Activated T-helper 1 cell treated with anti-CD3 and anti-CD28 coated beads, Interleukin-12 subunit alpha, Interleukin-12 subunit beta, Interleukin-2, Interleukin-4 antibody, amounts not matched to agents 30 ng/mL and 10 ng/mL and 1 ng/mL, durations not matched to agents 14 hours and 24 hours and 36 hours (primary cell): ENCODE measurements at regions of chr7 and their contacts with region 1.

Region 1: GRCh38 chr7:76008156-76008687 is 13.8 kb upstream of the TMEM120A start:
- DNase-seq: peak; percentile 24
- H3K4me3 Mint-ChIP-seq: peak overlapping the region; percentile 52
- H3K27ac Mint-ChIP-seq: peak overlapping the region; percentile 94
- H3K4me1 Mint-ChIP-seq: peaks cover 35% of the 10 kb centered on the region
- H3K27me3 Mint-ChIP-seq: peaks cover 5% of the 10 kb centered on the region

Region 2: DNA sequence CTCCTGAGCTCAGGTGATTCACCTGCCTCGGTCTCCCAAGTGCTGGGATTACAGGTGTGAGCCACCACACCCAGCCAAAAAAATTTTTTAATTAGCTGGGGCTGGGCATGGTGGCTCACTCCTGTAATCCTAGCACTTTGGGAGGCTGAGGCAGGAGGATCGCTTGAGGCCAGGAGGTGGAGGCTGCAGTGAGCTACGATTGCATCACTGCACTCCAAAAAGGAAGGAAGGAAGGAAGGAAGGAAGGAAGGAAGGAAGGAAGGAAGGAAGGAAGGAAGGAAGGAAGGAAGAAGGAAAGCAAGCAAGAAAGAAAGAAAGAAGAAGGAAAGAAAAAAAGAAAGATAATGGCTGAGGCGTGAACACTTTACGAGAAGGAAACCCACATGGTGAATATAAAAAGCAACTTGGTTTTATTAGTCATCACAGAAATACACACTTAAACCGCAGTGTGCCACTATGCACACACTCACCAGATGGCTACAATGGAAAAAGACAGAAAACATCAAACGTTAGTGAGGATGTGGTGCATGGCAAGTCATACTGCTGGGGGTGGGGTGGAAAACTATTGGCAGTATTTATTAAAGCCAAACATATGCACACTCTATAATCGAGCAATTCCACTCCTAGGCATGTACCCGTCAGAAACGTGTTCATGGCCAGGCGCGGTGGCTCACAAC is 231.8 kb before region 1 on chr7:
- intact Hi-C with region 1: loop called (anchors 1 kb)
- DNase-seq: peak; percentile 24
- H3K4me3 Mint-ChIP-seq: peak overlapping the region; percentile 26
- H3K27ac Mint-ChIP-seq: peak overlapping the region; percentile 83
- H3K4me1 Mint-ChIP-seq: peaks cover 31% of the 10 kb centered on the region
- H3K27me3 Mint-ChIP-seq: peaks cover 2% of the 10 kb centered on the region

Region 3: DNA sequence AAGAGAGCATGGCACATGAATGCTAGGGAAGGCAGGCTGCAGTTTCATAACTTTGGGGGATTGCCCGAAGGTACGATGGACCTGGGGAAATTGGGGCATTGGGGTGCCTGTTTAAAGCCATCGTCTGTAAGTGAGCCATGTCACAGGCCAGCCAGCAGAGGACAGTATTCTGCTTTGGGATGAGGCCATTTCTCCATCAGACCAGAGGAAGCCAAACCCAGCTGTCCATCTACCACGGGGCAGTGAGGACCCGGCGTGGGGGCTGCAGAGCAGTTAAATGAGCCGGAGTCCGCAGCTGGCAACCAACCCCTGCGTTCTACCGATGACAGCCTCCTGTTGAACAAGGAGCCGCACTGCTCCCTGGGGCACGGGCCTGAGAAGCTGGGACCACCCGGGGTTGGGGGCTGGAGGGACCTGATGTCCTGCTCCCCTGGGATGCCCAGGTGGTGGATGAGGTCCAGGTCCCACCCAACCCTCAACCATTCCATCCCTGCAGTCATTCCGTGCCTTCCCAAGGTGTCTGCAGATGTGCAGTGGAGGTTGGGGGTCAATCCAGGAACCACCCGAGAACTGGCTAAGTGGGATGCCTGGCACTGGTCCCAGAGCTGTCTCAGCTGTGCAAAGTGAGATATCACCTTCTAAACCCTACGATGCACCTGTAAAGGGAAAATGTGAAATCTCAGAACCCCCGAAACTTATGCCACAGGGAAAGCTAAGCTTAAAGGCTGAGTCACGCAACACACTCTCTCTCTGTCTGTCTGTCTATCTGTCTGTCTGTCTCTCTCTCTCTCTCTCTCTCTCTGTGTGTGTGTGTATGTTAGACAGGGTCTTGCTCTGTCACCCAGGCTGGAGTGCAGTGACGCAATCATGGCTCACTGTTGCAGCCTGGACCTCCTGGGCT is 141.5 kb before region 1 on chr7:
- intact Hi-C with region 1: loop called (anchors 1 kb)
- DNase-seq: no peak
- H3K4me3 Mint-ChIP-seq: no peak overlapping the region
- H3K27ac Mint-ChIP-seq: no peak overlapping the region
- H3K4me1 Mint-ChIP-seq: peaks cover 24% of the 10 kb centered on the region
- H3K27me3 Mint-ChIP-seq: peaks cover 8% of the 10 kb centered on the region

Region 4: GRCh38 chr7:75914730-75915585 is 93.3 kb before region 1 on chr7 and contains the start of gene POR:
- intact Hi-C with region 1: loop called (anchors 1 kb)
- DNase-seq: peak; percentile 97
- H3K4me3 Mint-ChIP-seq: peak within 1 kb of the TSS; percentile 91
- H3K27ac Mint-ChIP-seq: peak within 1 kb of the TSS; percentile 86
- H3K4me1 Mint-ChIP-seq: peaks cover 35% of the 10 kb centered on the region
- H3K27me3 Mint-ChIP-seq: peaks cover 3% of the 10 kb centered on the region
- total RNA-seq, gene POR: 84.4 and 91.2 TPM in 2 replicates

Region 5: GRCh38 chr7:75983471-75984129 is 24.6 kb before region 1 on chr7:
- intact Hi-C with region 1: no loop called
- DNase-seq: no peak
- H3K4me3 Mint-ChIP-seq: no peak overlapping the region
- H3K27ac Mint-ChIP-seq: no peak overlapping the region
- H3K4me1 Mint-ChIP-seq: no peaks in the 10 kb centered on the region
- H3K27me3 Mint-ChIP-seq: no peaks in the 10 kb centered on the region

Region 6: DNA sequence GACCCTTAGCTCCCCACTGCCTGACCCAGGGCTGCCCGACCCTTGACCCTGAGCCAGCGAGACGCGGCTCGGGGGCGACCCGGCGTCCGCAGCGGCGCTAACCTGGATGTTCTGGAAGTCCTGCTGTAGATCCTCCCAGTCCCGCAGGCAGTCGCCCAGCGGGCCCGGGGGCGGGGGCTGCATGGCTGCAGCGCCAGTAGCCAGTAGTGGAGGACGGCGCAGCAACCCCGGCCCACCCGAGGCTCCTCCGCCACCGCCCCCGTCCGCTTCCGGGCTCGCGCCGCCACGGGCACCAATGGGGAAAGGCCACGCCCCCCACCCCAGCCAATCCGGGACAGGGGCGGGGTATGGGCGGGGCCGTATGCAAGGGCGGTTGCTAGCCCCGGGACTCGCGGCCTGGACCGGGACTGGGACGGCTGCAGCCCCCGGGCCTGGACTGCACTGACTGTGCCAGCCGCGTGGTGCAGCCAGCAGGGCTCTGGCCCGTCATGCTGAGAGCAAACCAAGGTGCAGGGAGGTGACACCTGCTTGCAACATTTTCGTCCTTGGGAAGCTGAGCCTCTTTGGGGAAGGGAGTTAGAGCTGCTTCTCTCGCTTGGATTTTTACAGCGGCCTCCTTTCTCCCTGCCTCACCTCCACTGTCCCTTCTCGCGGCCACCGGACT is 13.7 kb before region 1 on chr7 and contains the start of gene TMEM120A:
- intact Hi-C with region 1: loop called (anchors 1 kb)
- DNase-seq: peak; percentile 93
- H3K4me3 Mint-ChIP-seq: peak within 1 kb of the TSS; percentile 84
- H3K27ac Mint-ChIP-seq: peak within 1 kb of the TSS; percentile 18
- H3K4me1 Mint-ChIP-seq: peaks cover 25% of the 10 kb centered on the region
- H3K27me3 Mint-ChIP-seq: no peaks in the 10 kb centered on the region
- total RNA-seq, gene TMEM120A: 44.3 and 49.9 TPM in 2 replicates

Region 7: GRCh38 chr7:76031964-76032363 is 23.7 kb after region 1 on chr7:
- intact Hi-C with region 1: no loop called
- DNase-seq: no peak
- H3K4me3 Mint-ChIP-seq: no peak overlapping the region
- H3K27ac Mint-ChIP-seq: no peak overlapping the region
- H3K4me1 Mint-ChIP-seq: peaks cover 31% of the 10 kb centered on the region
- H3K27me3 Mint-ChIP-seq: no peaks in the 10 kb centered on the region